Caco-2 (cell line): ENCODE measurements at regions of chr3 and their contacts with region 1.

Region 1: DNA sequence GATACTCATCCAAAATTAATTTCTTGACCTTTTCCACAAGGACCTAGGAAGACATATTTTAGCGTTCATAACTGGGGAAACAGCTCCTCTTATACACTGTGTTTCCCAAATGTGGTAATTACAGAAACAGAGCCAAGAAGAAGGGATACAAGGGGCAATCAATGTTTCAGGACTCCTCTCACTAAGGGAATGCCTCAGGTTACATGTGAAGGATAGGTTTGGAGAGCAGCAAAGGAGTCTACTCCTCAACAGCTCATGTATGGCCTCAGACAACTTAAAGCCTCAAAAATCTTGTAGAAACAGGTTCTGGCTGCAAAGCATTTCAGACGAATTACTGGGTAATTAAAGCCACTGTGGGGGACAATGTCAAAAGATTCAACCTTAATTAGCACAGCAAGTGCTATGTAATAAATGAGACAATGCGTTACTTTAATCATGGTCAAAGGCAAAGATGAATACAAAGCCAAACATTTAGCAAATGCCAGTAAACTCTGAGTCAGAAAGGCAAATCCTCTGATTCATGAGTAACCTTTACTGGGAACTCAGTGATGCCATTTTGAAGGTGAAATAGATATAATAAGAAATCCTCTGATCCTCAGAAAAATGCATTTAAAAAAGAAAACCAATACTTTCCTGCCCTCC is 1111.2 kb downstream of the TUSC7 start:
- DNase-seq: no peak
- H3K4me3 ChIP-seq: no peak overlapping the region
- H3K4me3 Mint-ChIP-seq: no peak overlapping the region
- H3K27ac Mint-ChIP-seq: no peak overlapping the region
- H3K4me1 ChIP-seq: no peaks in the 10 kb centered on the region
- H3K4me1 Mint-ChIP-seq: no peaks in the 10 kb centered on the region
- H3K27me3 ChIP-seq: no peaks in the 10 kb centered on the region
- H3K27me3 Mint-ChIP-seq: no peaks in the 10 kb centered on the region
- CTCF ChIP-seq: no peak

Region 2: GRCh38 chr3:117920253-117920898 is 99.6 kb after region 1 on chr3:
- CTCF ChIA-PET with region 1: no interaction called
- POLR2A ChIA-PET with region 1: no interaction called
- intact Hi-C with region 1: no loop called
- DNase-seq: no peak
- H3K4me3 ChIP-seq: no peak overlapping the region
- H3K4me3 Mint-ChIP-seq: no peak overlapping the region
- H3K27ac Mint-ChIP-seq: no peak overlapping the region
- H3K4me1 ChIP-seq: no peaks in the 10 kb centered on the region
- H3K4me1 Mint-ChIP-seq: no peaks in the 10 kb centered on the region
- H3K27me3 ChIP-seq: no peaks in the 10 kb centered on the region
- H3K27me3 Mint-ChIP-seq: peaks cover 2% of the 10 kb centered on the region
- CTCF ChIP-seq: no peak

Region 3: GRCh38 chr3:118636841-118637240 is 816.1 kb after region 1 on chr3:
- CTCF ChIA-PET with region 1: no interaction called
- POLR2A ChIA-PET with region 1: no interaction called
- intact Hi-C with region 1: loop called (anchors 10 kb)
- DNase-seq: peak; percentile 38 to 56
- H3K4me3 ChIP-seq: no peak overlapping the region
- H3K4me3 Mint-ChIP-seq: no peak overlapping the region
- H3K27ac Mint-ChIP-seq: no peak overlapping the region
- H3K4me1 ChIP-seq: no peaks in the 10 kb centered on the region
- H3K4me1 Mint-ChIP-seq: no peaks in the 10 kb centered on the region
- H3K27me3 ChIP-seq: no peaks in the 10 kb centered on the region
- H3K27me3 Mint-ChIP-seq: no peaks in the 10 kb centered on the region
- CTCF ChIP-seq: peak; percentile 51 to 57